ENCODE measurements at regions of chr15 and their contacts with region 1.

Region 1: GRCh38 chr15:64355944-64356709 is at the start of gene CSNK1G1:
- DNase-seq: peak; percentile 97
- H3K4me3 ChIP-seq: peak within 1 kb of the TSS; percentile 79 to 98 (median 94)
- H3K27ac ChIP-seq: peak within 1 kb of the TSS; percentile 84 to 87 (median 84)
- H3K4me1 ChIP-seq: peaks cover 0 to 21% (median 14%) of the 10 kb centered on the region in 4 donors
- H3K27me3 ChIP-seq: no peaks in the 10 kb centered on the region
- CTCF ChIP-seq: peak in 3 of 4 experiments; percentile 32 to 55 (median 40)
- EP300 ChIP-seq: no peak
- POLR2A ChIP-seq: peak; percentile 10 to 20
- total RNA-seq, gene CSNK1G1: 7.8 to 24.3 (median 14.5) TPM

Region 2: GRCh38 chr15:64162870-64163658 is 193.1 kb before region 1 on chr15 and contains the start of gene PPIB:
- intact Hi-C with region 1: loop called (anchors 2 kb)
- DNase-seq: peak; percentile 99
- H3K4me3 ChIP-seq: peak within 1 kb of the TSS; percentile 78 to 95 (median 80)
- H3K27ac ChIP-seq: peak within 1 kb of the TSS; percentile 83 to 94 (median 88)
- H3K4me1 ChIP-seq: peaks cover 0 to 51% (median 36%) of the 10 kb centered on the region in 4 donors
- H3K27me3 ChIP-seq: no peaks in the 10 kb centered on the region
- CTCF ChIP-seq: peak in 1 of 4 experiments; percentile 13
- EP300 ChIP-seq: peak in 1 of 4 donors; percentile 22
- POLR2A ChIP-seq: peak; percentile 54 to 67
- total RNA-seq, gene PPIB: 154 to 232 (median 183) TPM

Region 3: GRCh38 chr15:64209680-64210334 is 146.3 kb before region 1 on chr15:
- intact Hi-C with region 1: loop called (anchors 5 kb)
- DNase-seq: no peak
- H3K4me3 ChIP-seq: no peak overlapping the region
- H3K27ac ChIP-seq: no peak overlapping the region
- H3K4me1 ChIP-seq: no peaks in the 10 kb centered on the region
- H3K27me3 ChIP-seq: no peaks in the 10 kb centered on the region
- CTCF ChIP-seq: peak; percentile 10 to 35 (median 33)
- EP300 ChIP-seq: no peak
- POLR2A ChIP-seq: no peak

Region 4: GRCh38 chr15:64224511-64224910 is 131.6 kb before region 1 on chr15:
- intact Hi-C with region 1: loop called (anchors 5 kb)
- DNase-seq: peak; percentile 71
- H3K4me3 ChIP-seq: no peak overlapping the region
- H3K27ac ChIP-seq: peak overlapping the region in 3 of 4 donors; percentile 19 to 36 (median 21)
- H3K4me1 ChIP-seq: peaks cover 0 to 24% (median 18%) of the 10 kb centered on the region in 4 donors
- H3K27me3 ChIP-seq: no peaks in the 10 kb centered on the region
- CTCF ChIP-seq: no peak
- EP300 ChIP-seq: no peak
- POLR2A ChIP-seq: no peak

Region 5: GRCh38 chr15:64315136-64315660 is 40.9 kb before region 1 on chr15:
- intact Hi-C with region 1: loop called (anchors 2 kb)
- DNase-seq: no peak
- H3K4me3 ChIP-seq: no peak overlapping the region
- H3K27ac ChIP-seq: peak overlapping the region; percentile 20 to 56 (median 30)
- H3K4me1 ChIP-seq: peaks cover 0 to 16% (median 14%) of the 10 kb centered on the region in 4 donors
- H3K27me3 ChIP-seq: no peaks in the 10 kb centered on the region
- CTCF ChIP-seq: no peak
- EP300 ChIP-seq: no peak
- POLR2A ChIP-seq: no peak

Region 6: GRCh38 chr15:64387562-64388168 is 31.5 kb after region 1 on chr15 and contains the start of gene TRIP4:
- intact Hi-C with region 1: loop called (anchors 1 kb)
- DNase-seq: peak; percentile 97
- H3K4me3 ChIP-seq: peak within 1 kb of the TSS; percentile 52 to 82 (median 68)
- H3K27ac ChIP-seq: peak within 1 kb of the TSS; percentile 70 to 83 (median 80)
- H3K4me1 ChIP-seq: peaks cover 0 to 18% (median 12%) of the 10 kb centered on the region in 4 donors
- H3K27me3 ChIP-seq: no peaks in the 10 kb centered on the region
- CTCF ChIP-seq: no peak
- EP300 ChIP-seq: no peak
- POLR2A ChIP-seq: peak in 1 of 2 donors; percentile 33
- total RNA-seq, gene TRIP4: 11.0 to 26.6 (median 12.2) TPM